Caco-2 (cell line): ENCODE measurements at regions of chr2 and their contacts with region 1.

Region 1: GRCh38 chr2:191637182-191638078 is 40.5 kb upstream of the NABP1 start:
- DNase-seq: peak in 1 of 2 experiments; percentile 66
- H3K4me3 ChIP-seq: no peak overlapping the region
- H3K4me3 Mint-ChIP-seq: peak overlapping the region; percentile 66
- H3K27ac Mint-ChIP-seq: peak overlapping the region; percentile 89
- H3K4me1 ChIP-seq: peaks cover 58% of the 10 kb centered on the region
- H3K4me1 Mint-ChIP-seq: peaks cover 57% of the 10 kb centered on the region
- H3K27me3 ChIP-seq: no peaks in the 10 kb centered on the region
- H3K27me3 Mint-ChIP-seq: no peaks in the 10 kb centered on the region
- CTCF ChIP-seq: no peak

Region 2: GRCh38 chr2:191376981-191377629 is 260.3 kb before region 1 on chr2:
- CTCF ChIA-PET with region 1: no interaction called
- POLR2A ChIA-PET with region 1: no interaction called
- intact Hi-C with region 1: no loop called
- DNase-seq: peak; percentile 44 to 63
- H3K4me3 ChIP-seq: no peak overlapping the region
- H3K4me3 Mint-ChIP-seq: no peak overlapping the region
- H3K27ac Mint-ChIP-seq: peak overlapping the region; percentile 36
- H3K4me1 ChIP-seq: peaks cover 21% of the 10 kb centered on the region; the same call in 1 of the 2 replicates
- H3K4me1 Mint-ChIP-seq: peaks cover 12% of the 10 kb centered on the region
- H3K27me3 ChIP-seq: no peaks in the 10 kb centered on the region
- H3K27me3 Mint-ChIP-seq: no peaks in the 10 kb centered on the region
- CTCF ChIP-seq: no peak

Region 3: DNA sequence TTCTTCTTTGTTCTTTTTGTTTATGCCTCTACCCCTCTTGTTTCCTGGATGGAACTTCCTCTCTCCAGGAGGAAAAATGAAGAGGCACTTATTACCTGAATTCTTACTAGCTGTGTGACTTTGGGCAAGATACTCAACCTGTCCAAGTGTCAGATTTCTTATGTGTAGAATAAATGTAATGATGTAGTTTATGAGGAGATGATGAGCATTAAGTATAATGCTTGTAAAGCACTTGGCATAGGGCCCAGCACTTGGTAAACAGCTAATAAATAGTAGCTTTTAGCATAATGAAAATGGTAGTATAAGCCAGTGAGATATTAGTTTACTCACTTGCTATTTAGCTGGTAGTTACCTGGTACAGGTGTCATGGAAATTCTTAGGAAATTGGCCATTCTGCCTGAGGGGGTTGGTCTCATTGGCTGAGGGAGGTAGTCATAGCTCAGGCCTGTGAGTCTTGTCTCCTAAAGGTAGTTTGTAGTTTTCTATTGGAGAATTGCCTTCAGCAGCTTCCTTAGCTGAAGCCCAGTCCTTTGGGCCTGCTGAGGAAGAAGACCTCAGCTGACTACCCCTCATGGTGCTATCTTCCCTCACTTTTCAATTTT is 92.9 kb before region 1 on chr2:
- CTCF ChIA-PET with region 1: no interaction called
- POLR2A ChIA-PET with region 1: no interaction called
- intact Hi-C with region 1: no loop called
- DNase-seq: no peak
- H3K4me3 ChIP-seq: no peak overlapping the region
- H3K4me3 Mint-ChIP-seq: no peak overlapping the region
- H3K27ac Mint-ChIP-seq: no peak overlapping the region
- H3K4me1 ChIP-seq: 0 out of 2 replicates have a peak, but pooled peaks cover 2% of the 10 kb centered on the region
- H3K4me1 Mint-ChIP-seq: peaks cover 7% of the 10 kb centered on the region
- H3K27me3 ChIP-seq: no peaks in the 10 kb centered on the region
- H3K27me3 Mint-ChIP-seq: no peaks in the 10 kb centered on the region
- CTCF ChIP-seq: no peak

Region 4: GRCh38 chr2:191574232-191574631 is 63.2 kb before region 1 on chr2:
- CTCF ChIA-PET with region 1: no interaction called
- POLR2A ChIA-PET with region 1: no interaction called
- intact Hi-C with region 1: loop called (anchors 1 kb)
- DNase-seq: peak in 1 of 2 experiments; percentile 14
- H3K4me3 ChIP-seq: no peak overlapping the region
- H3K4me3 Mint-ChIP-seq: peak overlapping the region; percentile 24
- H3K27ac Mint-ChIP-seq: peak overlapping the region; percentile 79
- H3K4me1 ChIP-seq: peaks cover 59% of the 10 kb centered on the region
- H3K4me1 Mint-ChIP-seq: peaks cover 49% of the 10 kb centered on the region
- H3K27me3 ChIP-seq: no peaks in the 10 kb centered on the region
- H3K27me3 Mint-ChIP-seq: no peaks in the 10 kb centered on the region
- CTCF ChIP-seq: no peak

Region 5: DNA sequence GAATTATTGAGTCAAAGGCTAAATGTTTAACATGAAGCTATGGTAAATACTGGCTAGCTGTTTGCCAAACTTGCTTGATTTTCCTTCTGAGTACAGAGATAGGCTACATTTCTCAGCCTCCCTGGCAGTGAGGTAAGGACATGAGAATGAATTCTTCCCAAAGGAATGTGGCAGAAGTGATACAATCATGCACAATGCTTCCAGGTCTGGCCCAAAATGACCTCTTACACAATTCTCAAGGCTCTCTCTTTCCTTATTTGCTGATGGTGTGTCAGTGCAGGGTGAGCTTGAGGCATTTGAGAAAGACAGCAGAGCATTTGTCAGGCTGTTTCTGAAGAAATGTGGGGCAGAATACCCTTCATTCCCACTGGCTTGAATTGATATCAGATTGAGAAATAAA is 55.1 kb before region 1 on chr2:
- CTCF ChIA-PET with region 1: interaction called, 3 read pairs
- POLR2A ChIA-PET with region 1: interaction called, 4 read pairs
- intact Hi-C with region 1: loop called (anchors 1 kb)
- DNase-seq: peak; percentile 79 to 80
- H3K4me3 ChIP-seq: no peak overlapping the region
- H3K4me3 Mint-ChIP-seq: peak overlapping the region; percentile 46
- H3K27ac Mint-ChIP-seq: peak overlapping the region; percentile 97
- H3K4me1 ChIP-seq: peaks cover 45% of the 10 kb centered on the region
- H3K4me1 Mint-ChIP-seq: peaks cover 13% of the 10 kb centered on the region
- H3K27me3 ChIP-seq: no peaks in the 10 kb centered on the region
- H3K27me3 Mint-ChIP-seq: no peaks in the 10 kb centered on the region
- CTCF ChIP-seq: no peak

Region 6: DNA sequence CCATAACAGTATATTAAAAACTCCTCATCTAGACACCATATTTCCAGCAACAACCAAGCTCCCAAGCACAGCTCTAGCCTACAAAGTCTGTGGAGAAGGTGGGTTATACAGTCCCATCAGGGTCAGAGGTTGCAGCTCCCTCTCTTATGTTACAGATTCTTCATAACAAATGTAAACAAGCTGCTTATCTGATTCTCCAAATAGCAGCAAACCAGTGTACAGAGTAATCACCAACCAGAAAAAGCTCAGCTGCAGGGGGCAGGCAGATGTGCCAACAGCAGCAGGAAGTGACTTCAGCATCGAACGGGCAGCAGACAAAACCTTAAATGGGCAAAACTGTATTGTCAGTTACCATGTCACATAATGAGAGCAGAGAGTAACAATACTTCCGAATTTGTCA is 12.4 kb before region 1 on chr2:
- CTCF ChIA-PET with region 1: interaction called, 4 read pairs
- POLR2A ChIA-PET with region 1: interaction called, 5 read pairs
- intact Hi-C with region 1: loop called (anchors 1 kb)
- DNase-seq: peak; percentile 40 to 54
- H3K4me3 ChIP-seq: no peak overlapping the region
- H3K4me3 Mint-ChIP-seq: no peak overlapping the region
- H3K27ac Mint-ChIP-seq: peak overlapping the region; percentile 89
- H3K4me1 ChIP-seq: peaks cover 76% of the 10 kb centered on the region
- H3K4me1 Mint-ChIP-seq: peaks cover 56% of the 10 kb centered on the region
- H3K27me3 ChIP-seq: no peaks in the 10 kb centered on the region
- H3K27me3 Mint-ChIP-seq: no peaks in the 10 kb centered on the region
- CTCF ChIP-seq: no peak

Region 7: DNA sequence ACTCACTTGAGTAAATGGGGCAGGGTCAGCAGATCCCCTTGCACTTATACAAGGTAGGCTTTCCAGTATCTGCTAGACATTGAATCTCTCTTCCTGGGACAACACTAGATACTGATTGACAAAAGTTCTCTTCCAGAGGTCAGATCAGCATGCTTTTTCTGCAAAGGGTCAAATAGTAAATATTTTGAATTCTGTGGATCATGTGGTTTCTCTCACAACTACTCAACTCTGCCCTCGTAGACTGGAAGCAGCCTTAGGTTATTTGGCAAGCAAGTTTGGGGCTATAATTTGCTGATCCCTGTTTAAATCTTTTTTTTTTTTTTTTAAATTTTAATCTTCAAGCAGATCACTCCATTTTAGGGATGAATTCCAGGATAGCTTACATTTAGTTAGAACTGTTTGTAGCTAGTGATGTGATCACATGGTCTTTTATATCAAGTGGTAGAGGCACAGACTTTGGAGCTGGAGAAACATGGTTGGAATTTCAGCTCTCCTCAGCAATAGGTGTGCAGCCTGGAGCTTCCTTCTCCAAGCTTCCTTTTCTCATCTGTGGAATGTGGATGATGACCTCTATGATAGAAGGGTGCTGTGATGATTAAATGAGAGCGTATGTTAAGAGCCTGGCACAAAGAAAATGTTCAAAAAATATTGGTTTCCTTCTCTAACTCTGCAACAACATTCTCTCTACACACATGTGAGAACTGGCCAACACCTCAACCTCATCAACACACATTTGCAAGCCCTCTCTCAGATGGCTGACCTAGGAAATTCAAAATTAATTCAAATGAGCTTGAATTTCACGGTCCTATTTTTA is 23.4 kb after region 1 on chr2:
- CTCF ChIA-PET with region 1: no interaction called
- POLR2A ChIA-PET with region 1: interaction called, 5 read pairs
- intact Hi-C with region 1: loop called (anchors 1 kb)
- DNase-seq: no peak
- H3K4me3 ChIP-seq: no peak overlapping the region
- H3K4me3 Mint-ChIP-seq: no peak overlapping the region
- H3K27ac Mint-ChIP-seq: no peak overlapping the region
- H3K4me1 ChIP-seq: peaks cover 18% of the 10 kb centered on the region
- H3K4me1 Mint-ChIP-seq: peaks cover 21% of the 10 kb centered on the region
- H3K27me3 ChIP-seq: no peaks in the 10 kb centered on the region
- H3K27me3 Mint-ChIP-seq: no peaks in the 10 kb centered on the region
- CTCF ChIP-seq: no peak

Region 8: DNA sequence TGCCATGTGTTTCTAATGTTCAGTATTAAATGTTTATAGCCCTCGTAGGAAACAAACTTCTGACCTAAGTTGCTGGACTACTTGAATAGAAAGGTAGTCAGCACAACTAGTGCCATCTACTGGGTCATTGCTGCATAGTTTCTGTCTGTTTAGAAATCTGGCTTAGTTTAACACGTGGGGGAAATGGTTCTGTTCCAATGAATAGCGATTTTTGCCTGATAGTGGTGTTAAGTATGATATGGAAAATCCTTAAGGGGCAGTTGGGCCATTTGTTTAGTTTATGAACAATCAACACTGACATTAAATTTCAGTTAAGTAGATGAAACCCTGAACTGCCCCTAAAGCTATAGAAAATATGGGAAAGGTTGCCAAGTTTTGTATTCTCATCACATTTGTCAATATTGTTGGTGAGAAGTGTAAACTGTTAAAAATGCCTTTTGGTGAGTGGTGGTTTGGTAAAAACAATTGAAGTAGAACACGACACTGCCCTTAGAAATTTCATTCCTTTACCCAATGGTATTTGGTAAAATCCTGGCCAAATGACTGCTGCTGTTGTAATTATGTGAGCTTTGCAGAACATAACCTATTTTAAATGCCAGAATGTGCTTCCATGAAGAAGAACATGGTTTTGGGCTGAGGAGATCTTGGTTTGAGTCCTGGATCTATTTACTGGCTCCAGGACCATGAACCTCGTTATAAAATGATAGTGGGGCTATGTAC is 53.7 kb after region 1 on chr2:
- CTCF ChIA-PET with region 1: interaction called, 3 read pairs
- POLR2A ChIA-PET with region 1: interaction called, 4 read pairs
- intact Hi-C with region 1: loop called (anchors 1 kb)
- DNase-seq: peak; percentile 56 to 70
- H3K4me3 ChIP-seq: no peak overlapping the region
- H3K4me3 Mint-ChIP-seq: peak overlapping the region; percentile 52
- H3K27ac Mint-ChIP-seq: peak overlapping the region; percentile 53
- H3K4me1 ChIP-seq: peaks cover 62% of the 10 kb centered on the region
- H3K4me1 Mint-ChIP-seq: peaks cover 44% of the 10 kb centered on the region
- H3K27me3 ChIP-seq: no peaks in the 10 kb centered on the region
- H3K27me3 Mint-ChIP-seq: no peaks in the 10 kb centered on the region
- CTCF ChIP-seq: peak; percentile 72 to 82